Heart left ventricle (tissue), 16 donors: ENCODE measurements at regions of chr10 and their contacts with region 1.

Region 1: GRCh38 chr10:4663162-4663904 is 162.7 kb upstream of the AKR1E2 start:
- DNase-seq: peak in 4 of 5 donors; percentile 77 to 85 (median 80)
- ATAC-seq: peak; percentile 84 to 95 (median 92)
- H3K4me3 ChIP-seq: peak overlapping the region in 6 of 12 donors; percentile 3 to 27 (median 10)
- H3K27ac ChIP-seq: peak overlapping the region; percentile 88 to 99 (median 92)
- H3K4me1 ChIP-seq: peaks cover 10 to 44% (median 34%) of the 10 kb centered on the region in 12 donors
- H3K27me3 ChIP-seq: no peaks in the 10 kb centered on the region
- CTCF ChIP-seq: no peak
- POLR2A ChIP-seq: peak in 1 of 2 donors; percentile 7

Region 2: GRCh38 chr10:3239066-3239919 is 1424.0 kb before region 1 on chr10:
- intact Hi-C with region 1: loop called in 9 of 10 experiments (anchors 5 to 10 kb)
- DNase-seq: peak; percentile 70 to 85 (median 75)
- ATAC-seq: peak; percentile 59 to 88 (median 82)
- H3K4me3 ChIP-seq: peak overlapping the region in 8 of 12 donors; percentile 6 to 36 (median 24)
- H3K27ac ChIP-seq: peak overlapping the region in 8 of 12 donors; percentile 39 to 75 (median 54)
- H3K4me1 ChIP-seq: peaks cover 0 to 10% (median 3%) of the 10 kb centered on the region in 12 donors
- H3K27me3 ChIP-seq: no peaks in the 10 kb centered on the region
- CTCF ChIP-seq: peak; percentile 84 to 98 (median 94)
- POLR2A ChIP-seq: no peak

Region 3: DNA sequence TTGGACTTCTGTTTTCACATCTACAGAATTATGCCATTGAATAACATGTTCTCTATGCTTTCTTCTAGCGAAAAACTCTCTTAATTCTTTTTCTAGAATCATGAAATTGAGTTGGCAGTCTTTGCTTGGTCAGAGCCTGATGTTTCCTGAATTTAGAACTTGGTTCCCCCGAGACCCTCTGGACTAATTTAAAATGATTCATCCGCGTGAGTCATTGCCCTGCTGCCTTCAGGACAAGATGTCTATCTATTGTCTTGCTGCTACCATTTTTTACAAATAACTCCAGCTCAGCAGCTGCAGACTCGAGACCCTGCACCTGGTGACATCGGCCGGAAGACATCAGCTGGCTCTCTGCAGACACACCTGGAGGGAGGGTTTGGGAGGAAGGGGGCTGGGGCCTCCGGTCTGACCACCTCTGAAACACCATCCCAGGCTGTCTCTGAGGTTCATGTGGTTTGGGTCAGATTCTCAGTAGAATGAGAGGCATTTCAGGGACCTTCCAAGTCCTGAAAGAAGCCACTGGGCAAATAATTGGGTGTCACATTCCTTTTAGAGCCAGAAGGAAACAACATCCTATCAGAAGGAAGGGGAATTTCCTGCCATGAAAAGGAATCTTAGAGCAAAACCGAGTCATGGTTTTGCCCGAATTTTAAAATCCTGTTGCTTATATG is 857.4 kb before region 1 on chr10:
- intact Hi-C with region 1: loop called in 1 of 10 experiments (anchors 10 kb)
- DNase-seq: peak in 4 of 5 donors; percentile 53 to 76 (median 59)
- ATAC-seq: peak in 3 of 4 donors; percentile 8 to 47 (median 43)
- H3K4me3 ChIP-seq: peak overlapping the region in 6 of 12 donors; percentile 4 to 31 (median 9)
- H3K27ac ChIP-seq: peak overlapping the region; percentile 66 to 96 (median 84)
- H3K4me1 ChIP-seq: peaks cover 0 to 94% (median 76%) of the 10 kb centered on the region in 12 donors
- H3K27me3 ChIP-seq: no peaks in the 10 kb centered on the region
- CTCF ChIP-seq: no peak
- POLR2A ChIP-seq: no peak

Region 4: DNA sequence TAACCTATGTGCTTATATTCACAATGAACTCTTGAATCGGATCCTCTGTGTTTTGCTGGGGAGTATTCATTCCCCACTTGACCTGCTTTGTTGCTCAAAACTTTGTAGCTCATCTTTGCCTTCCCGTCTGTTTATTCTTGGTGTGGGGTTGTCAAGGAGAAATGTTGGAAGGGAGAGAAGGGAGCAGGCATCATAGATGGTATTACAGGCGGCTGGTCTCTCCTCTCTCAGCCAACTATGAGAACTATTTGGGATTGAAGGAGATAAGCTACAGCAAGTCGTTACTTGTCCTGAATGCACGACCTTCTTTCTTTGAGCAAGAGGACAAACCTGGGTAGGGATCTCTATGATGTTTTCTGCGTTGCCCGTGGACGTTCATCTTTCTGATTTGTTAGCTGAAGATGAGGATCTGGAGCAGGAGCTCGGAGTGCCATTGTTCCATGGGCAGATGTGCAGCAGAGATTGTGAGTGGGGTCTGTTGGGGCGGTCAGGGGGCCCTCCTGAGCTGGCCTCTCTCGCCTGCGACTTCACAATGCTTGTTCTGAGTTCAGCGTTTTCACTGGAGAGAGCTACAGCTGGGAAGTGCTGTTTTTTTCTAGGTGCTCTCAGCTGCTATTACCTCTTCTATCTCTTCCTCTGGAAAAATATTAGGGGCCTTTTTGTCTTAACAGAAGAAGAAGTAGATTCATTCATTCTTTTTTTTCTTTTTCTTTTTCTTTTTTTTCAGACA is 751.5 kb before region 1 on chr10:
- intact Hi-C with region 1: loop called in 3 of 10 experiments (anchors 10 kb)
- DNase-seq: no peak
- ATAC-seq: peak; percentile 87 to 90 (median 89)
- H3K4me3 ChIP-seq: peak overlapping the region in 11 of 12 donors; percentile 6 to 56 (median 48)
- H3K27ac ChIP-seq: peak overlapping the region; percentile 53 to 91 (median 82)
- H3K4me1 ChIP-seq: peaks cover 0 to 36% (median 0%) of the 10 kb centered on the region in 12 donors
- H3K27me3 ChIP-seq: no peaks in the 10 kb centered on the region
- CTCF ChIP-seq: no peak
- POLR2A ChIP-seq: peak in 1 of 2 donors; percentile 30

Region 5: GRCh38 chr10:4241724-4242345 is 421.5 kb before region 1 on chr10:
- intact Hi-C with region 1: loop called in 7 of 10 experiments (anchors 5 to 10 kb)
- DNase-seq: peak in 4 of 5 donors; percentile 72 to 78 (median 76)
- ATAC-seq: peak; percentile 87 to 91 (median 88)
- H3K4me3 ChIP-seq: peak overlapping the region in 11 of 12 donors; percentile 26 to 57 (median 45)
- H3K27ac ChIP-seq: peak overlapping the region; percentile 63 to 96 (median 89)
- H3K4me1 ChIP-seq: peaks cover 0 to 50% (median 41%) of the 10 kb centered on the region in 12 donors
- H3K27me3 ChIP-seq: no peaks in the 10 kb centered on the region
- CTCF ChIP-seq: no peak
- POLR2A ChIP-seq: no peak

Region 6: GRCh38 chr10:4704034-4704545 is 40.8 kb after region 1 on chr10:
- intact Hi-C with region 1: loop called in 2 of 10 experiments (anchors 2 to 5 kb)
- DNase-seq: peak in 2 of 5 donors; percentile 38 to 54
- ATAC-seq: peak; percentile 82 to 97 (median 92)
- H3K4me3 ChIP-seq: no peak overlapping the region
- H3K27ac ChIP-seq: peak overlapping the region in 10 of 12 donors; percentile 23 to 83 (median 60)
- H3K4me1 ChIP-seq: peaks cover 0 to 28% (median 9%) of the 10 kb centered on the region in 12 donors
- H3K27me3 ChIP-seq: no peaks in the 10 kb centered on the region
- CTCF ChIP-seq: no peak
- POLR2A ChIP-seq: no peak